Caco-2 (cell line): ENCODE measurements at regions of chr15 and their contacts with region 1.

Region 1: GRCh38 chr15:34318277-34319079 is 19.1 kb downstream of the SLC12A6 start:
- DNase-seq: peak; percentile 64 to 74
- H3K4me3 ChIP-seq: peak overlapping the region; percentile 50
- H3K4me3 Mint-ChIP-seq: peak overlapping the region; percentile 84
- H3K27ac Mint-ChIP-seq: peak overlapping the region; percentile 66
- H3K4me1 ChIP-seq: 0 out of 2 replicates have a peak, but pooled peaks cover 4% of the 10 kb centered on the region
- H3K4me1 Mint-ChIP-seq: no peaks in the 10 kb centered on the region
- H3K27me3 ChIP-seq: no peaks in the 10 kb centered on the region
- H3K27me3 Mint-ChIP-seq: no peaks in the 10 kb centered on the region
- CTCF ChIP-seq: no peak

Region 2: DNA sequence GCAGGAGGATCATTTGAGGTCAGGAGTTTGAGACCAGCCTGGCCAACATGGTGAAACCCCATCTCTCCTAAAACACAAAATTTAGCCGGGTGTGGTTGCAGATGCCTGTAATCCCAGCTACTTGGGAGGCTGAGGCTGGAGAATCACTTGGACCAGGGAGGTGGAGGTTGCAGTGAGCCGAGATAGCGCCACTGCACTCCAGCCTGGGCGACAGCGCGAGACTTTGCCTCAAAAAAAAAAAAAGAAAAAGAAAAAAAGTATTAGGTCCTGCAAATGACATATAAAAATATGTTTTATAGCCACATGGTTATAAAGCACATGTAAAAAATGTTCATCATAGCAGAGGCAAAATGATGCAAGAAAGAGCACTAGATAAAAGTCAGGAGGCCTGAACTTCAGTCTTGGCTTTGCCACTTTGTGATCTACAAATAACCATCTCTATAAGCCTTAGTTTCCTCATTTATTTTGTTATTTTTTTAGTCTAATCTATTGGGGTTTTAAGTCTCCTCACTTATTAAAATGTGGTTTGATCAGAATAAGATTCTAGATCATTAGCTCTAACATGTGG is 14.2 kb after region 1 on chr15:
- CTCF ChIA-PET with region 1: no interaction called
- POLR2A ChIA-PET with region 1: interaction called, 13 read pairs
- intact Hi-C with region 1: no loop called
- DNase-seq: no peak
- H3K4me3 ChIP-seq: no peak overlapping the region
- H3K4me3 Mint-ChIP-seq: no peak overlapping the region
- H3K27ac Mint-ChIP-seq: no peak overlapping the region
- H3K4me1 ChIP-seq: no peaks in the 10 kb centered on the region
- H3K4me1 Mint-ChIP-seq: no peaks in the 10 kb centered on the region
- H3K27me3 ChIP-seq: no peaks in the 10 kb centered on the region
- H3K27me3 Mint-ChIP-seq: no peaks in the 10 kb centered on the region
- CTCF ChIP-seq: no peak